Common myeloid progenitor, CD34-positive (primary cell): ENCODE measurements at regions of chr12 and their contacts with region 1.

Region 1: GRCh38 chr12:57896434-57897201 is 44.7 kb upstream of the ATP23 start:
- DNase-seq: peak in 1 of 3 donors; percentile 30
- H3K4me3 ChIP-seq: peak overlapping the region; percentile 40 to 75 (median 50)
- H3K27ac ChIP-seq: no peak overlapping the region
- H3K4me1 ChIP-seq: peaks cover 23 to 68% (median 61%) of the 10 kb centered on the region in 4 experiments
- H3K27me3 ChIP-seq: no peaks in the 10 kb centered on the region

Region 2: DNA sequence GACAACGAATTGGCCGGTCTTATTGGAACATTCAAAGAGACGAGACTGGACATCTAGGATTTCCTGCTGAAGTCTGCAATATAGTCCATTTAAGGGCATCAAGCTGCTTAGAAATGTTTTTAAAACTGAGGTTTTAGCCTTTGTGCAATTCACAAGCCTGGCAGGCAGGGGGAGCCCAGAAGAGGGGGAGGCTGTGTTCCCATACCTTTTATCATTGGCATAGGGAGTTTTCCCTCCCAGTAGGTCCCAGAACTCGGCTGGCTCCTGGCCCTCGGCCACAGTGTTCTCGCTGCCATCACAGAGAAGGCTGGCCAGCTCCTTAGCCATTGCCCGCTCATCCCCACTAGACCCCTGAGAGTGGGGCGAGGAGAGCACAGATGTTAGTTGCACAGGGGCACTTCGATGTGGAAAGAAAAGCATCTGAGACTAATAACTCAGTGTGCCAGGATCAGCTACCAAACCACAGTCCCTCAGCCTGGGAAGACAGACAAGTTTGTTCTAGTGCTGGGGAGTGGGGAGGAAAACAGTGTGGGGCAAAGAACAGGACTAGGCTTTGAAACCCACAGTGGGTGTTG is 93.2 kb before region 1 on chr12:
- CTCF ChIA-PET with region 1: interaction called, 42 read pairs
- POLR2A ChIA-PET with region 1: no interaction called
- DNase-seq: peak; percentile 14 to 36 (median 21)
- H3K4me3 ChIP-seq: no peak overlapping the region
- H3K27ac ChIP-seq: no peak overlapping the region
- H3K4me1 ChIP-seq: no peaks in the 10 kb centered on the region
- H3K27me3 ChIP-seq: no peaks in the 10 kb centered on the region

Region 3: DNA sequence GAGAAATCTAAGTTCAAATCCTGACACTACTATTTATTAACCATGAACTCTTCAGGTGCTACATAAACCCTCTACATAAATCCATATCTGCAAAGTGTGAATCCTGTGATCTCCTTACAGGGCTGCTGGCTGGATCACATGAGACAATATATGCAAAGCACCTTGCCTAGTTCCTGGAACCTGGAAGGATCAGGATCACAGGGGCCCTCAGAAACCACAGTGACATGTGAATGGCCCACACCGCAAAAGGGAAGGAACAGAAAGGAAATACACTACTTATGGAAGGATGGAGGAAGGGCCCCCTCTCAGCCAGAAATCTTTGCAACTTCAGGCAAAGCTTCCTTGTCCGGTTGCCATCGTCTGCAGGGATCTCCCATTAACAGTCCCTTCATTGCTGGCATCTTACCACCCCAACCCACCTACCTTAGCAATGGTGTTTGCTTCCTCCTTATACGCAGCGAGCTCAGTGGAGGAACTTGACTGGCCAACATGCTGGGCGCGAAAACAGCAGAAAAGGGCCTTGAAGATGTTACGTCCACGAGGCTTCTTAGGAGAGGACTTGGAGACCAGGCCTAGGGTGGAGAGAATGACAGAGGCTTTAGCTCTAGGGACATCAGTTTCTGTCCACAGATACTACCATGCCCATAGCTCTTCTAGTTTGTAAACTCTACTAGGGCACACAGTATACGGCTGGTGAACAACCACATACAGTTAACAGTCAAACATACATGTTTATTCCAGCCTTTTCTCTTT is 67.4 kb before region 1 on chr12:
- CTCF ChIA-PET with region 1: interaction called, 313 read pairs
- POLR2A ChIA-PET with region 1: interaction called, 7 read pairs
- DNase-seq: no peak
- H3K4me3 ChIP-seq: no peak overlapping the region
- H3K27ac ChIP-seq: no peak overlapping the region
- H3K4me1 ChIP-seq: peaks cover 9 to 47% (median 45%) of the 10 kb centered on the region in 4 experiments
- H3K27me3 ChIP-seq: no peaks in the 10 kb centered on the region

Region 4: DNA sequence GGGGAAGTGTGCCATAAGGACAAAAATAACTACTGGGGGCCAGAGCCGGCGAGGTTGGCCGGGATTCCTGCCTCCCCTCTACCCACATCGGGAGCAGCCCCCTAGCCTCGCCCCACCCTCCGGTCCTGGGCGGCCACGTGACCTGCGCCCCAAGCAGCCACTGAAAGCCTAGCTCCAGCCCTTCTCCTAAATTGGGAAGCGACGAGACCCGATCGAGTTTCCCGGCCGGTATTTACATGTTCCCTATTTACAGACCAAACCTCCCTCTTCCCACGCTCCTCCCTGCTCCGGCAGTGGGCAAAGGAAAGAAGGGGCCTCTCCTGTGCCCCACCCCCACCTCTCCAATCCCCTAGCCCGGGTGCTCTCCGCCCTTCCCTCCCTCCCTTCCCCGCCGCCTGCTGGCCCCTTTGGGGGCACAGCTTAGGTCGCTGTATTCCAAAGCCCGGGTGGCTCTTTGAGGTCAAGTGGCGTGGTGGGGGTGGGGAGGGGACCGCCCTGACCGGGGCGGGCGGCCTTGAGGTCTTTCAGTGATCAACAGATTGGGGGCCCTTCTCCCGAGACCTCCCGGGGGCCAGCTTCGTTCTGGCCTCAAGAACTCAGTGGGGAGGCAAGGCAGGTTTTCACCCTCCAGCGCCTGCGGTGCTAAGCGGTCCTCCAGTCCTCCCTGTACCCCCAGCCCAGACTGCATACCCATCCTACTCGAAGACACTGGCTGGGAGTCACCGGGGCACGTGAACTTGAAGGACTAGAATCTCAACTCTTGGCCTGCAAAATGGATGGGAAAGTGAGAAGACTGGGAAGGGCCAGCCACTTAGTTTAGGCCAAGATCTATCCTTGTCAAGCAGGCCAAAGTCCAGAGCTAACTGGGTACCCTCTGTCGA is 43.8 kb before region 1 on chr12:
- CTCF ChIA-PET with region 1: interaction called, 29 read pairs
- POLR2A ChIA-PET with region 1: no interaction called
- DNase-seq: peak in 1 of 3 donors; percentile 45
- H3K4me3 ChIP-seq: peak overlapping the region; percentile 20 to 76 (median 48)
- H3K27ac ChIP-seq: no peak overlapping the region
- H3K4me1 ChIP-seq: peaks cover 7 to 43% (median 36%) of the 10 kb centered on the region in 4 experiments
- H3K27me3 ChIP-seq: no peaks in the 10 kb centered on the region